ENCODE measurements at regions of chr7 and their contacts with region 1.

Region 1: DNA sequence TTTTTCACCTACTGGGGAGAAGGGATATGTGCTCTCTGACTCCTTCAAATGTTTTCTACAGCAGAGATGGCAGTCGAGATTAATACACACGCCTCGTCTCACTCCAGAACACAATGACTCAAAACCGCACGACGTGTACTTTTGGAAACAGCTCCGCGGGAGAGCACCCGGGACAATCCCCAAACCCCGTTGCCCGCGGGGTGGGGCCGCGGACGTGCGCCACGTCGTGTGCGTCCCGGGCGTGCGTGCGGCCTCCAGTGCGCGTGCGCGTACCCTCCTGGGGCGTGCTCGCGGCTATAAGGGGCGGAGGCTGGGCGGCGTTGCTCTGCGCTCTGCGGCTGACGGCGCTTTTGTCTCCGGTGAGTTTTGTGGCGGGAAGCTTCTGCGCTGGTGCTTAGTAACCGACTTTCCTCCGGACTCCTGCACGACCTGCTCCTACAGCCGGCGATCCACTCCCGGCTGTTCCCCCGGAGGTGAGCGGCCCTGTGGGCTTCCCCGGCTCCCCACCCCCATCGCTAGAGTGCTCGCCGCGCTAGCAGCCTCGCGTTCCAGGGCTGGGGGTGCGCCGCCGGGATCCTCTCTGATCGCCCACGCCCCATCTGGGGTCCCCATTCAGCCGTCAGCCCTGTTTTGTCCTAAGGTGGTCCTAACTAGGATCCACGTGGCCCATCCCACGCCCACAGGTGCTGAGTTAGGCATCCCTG is at the start of gene HILPDA:
- DNase-seq: peak; percentile 96
- ATAC-seq: peak; percentile 81
- H3K4me3 Mint-ChIP-seq: peak within 1 kb of the TSS; percentile 83
- H3K27ac Mint-ChIP-seq: peak within 1 kb of the TSS; percentile 99
- H3K4me1 Mint-ChIP-seq: peaks cover 59% of the 10 kb centered on the region
- H3K27me3 Mint-ChIP-seq: peaks cover 11% of the 10 kb centered on the region
- CTCF ChIP-seq: no peak
- total RNA-seq, gene HILPDA: 344 to 362 TPM

Region 2: DNA sequence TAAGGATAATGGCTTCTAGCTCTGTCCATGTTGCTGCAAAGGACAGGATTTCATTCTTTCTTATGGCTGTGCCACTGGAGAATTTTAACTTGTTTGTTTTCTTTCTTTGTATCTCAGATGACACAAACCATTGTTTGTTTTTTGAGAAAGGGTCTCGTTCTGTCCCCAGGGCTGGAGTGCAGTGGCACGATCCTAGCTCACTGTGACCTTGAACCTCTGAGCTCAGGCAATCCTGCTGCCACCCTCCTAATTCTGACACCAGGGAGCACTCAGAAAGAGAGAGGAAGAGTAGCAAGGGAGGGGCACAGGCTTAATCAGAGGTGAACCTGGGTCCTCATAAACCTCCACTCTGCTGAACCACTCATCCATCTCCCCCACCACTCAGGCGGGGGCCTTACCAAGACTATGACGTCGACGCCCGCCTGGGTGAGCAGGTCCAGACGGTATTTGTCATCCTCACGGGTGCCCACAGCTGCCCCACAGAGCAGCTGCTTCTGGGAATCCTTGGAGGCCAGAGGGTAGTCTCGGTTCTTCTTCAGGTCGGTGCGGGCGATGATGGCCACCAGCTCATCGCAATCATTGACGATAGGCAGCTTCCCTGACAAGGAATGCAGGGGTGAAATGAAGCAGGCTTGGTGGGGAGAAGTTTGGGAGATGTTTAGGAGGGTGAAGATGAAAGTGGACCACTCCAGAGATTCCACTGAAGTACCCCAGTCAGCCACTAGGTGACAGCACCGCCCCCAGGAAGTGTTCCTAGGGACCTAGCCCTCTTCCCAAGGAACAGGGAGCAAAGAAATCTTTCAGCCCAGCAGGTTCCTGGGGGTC is 57.5 kb before region 1 on chr7:
- CTCF ChIA-PET with region 1: interaction called, 19 read pairs
- POLR2A ChIA-PET with region 1: no interaction called
- intact Hi-C with region 1: loop called (anchors 10 kb)
- DNase-seq: peak; percentile 58
- ATAC-seq: peak; percentile 72
- H3K4me3 Mint-ChIP-seq: no peak overlapping the region
- H3K27ac Mint-ChIP-seq: no peak overlapping the region
- H3K4me1 Mint-ChIP-seq: no peaks in the 10 kb centered on the region
- H3K27me3 Mint-ChIP-seq: no peaks in the 10 kb centered on the region
- CTCF ChIP-seq: peak; percentile 96

Region 3: GRCh38 chr7:128409596-128410160 is 46.0 kb before region 1 on chr7 and contains the start of gene IMPDH1:
- CTCF ChIA-PET with region 1: interaction called, 43 read pairs
- POLR2A ChIA-PET with region 1: interaction called, 3 read pairs
- intact Hi-C with region 1: loop called (anchors 10 kb)
- DNase-seq: peak; percentile 85
- ATAC-seq: peak; percentile 84
- H3K4me3 Mint-ChIP-seq: peak within 1 kb of the TSS; percentile 76
- H3K27ac Mint-ChIP-seq: peak within 1 kb of the TSS; percentile 59
- H3K4me1 Mint-ChIP-seq: peaks cover 18% of the 10 kb centered on the region
- H3K27me3 Mint-ChIP-seq: peaks cover 10% of the 10 kb centered on the region
- CTCF ChIP-seq: no peak
- total RNA-seq, gene IMPDH1: 60.5 to 68.1 TPM

Region 4: DNA sequence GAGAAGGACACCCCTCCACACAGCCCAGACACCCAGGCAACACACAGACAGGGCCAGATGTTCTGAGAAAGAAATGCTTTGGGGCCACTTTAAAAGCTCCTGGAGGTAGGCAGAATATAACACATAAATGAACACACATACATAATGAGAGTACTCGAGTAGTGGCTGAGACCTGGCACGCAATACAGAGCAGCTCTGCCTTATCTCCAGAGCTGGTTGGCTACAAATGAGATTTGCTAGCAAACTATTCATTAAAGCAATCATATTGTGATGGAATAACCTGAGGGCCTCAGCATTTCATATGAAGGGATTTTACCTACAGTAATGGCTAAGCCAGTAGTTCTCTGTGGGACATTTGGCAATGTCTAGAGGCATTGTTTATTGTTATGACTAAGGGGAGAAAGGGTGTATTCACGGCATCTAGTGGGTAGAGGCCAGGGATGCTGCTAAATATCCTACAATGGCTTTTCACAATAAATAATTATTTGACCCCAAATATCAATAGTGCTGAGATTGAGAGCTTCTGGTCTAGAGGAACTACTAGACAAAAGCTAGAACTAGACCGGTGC is 40.4 kb before region 1 on chr7:
- CTCF ChIA-PET with region 1: interaction called, 43 read pairs
- POLR2A ChIA-PET with region 1: interaction called, 6 read pairs
- intact Hi-C with region 1: no loop called
- DNase-seq: no peak
- ATAC-seq: no peak
- H3K4me3 Mint-ChIP-seq: no peak overlapping the region
- H3K27ac Mint-ChIP-seq: no peak overlapping the region
- H3K4me1 Mint-ChIP-seq: peaks cover 2% of the 10 kb centered on the region
- H3K27me3 Mint-ChIP-seq: peaks cover 10% of the 10 kb centered on the region
- CTCF ChIP-seq: no peak

Region 5: GRCh38 chr7:128443831-128444600 is 11.7 kb before region 1 on chr7:
- CTCF ChIA-PET with region 1: interaction called, 60 read pairs
- POLR2A ChIA-PET with region 1: interaction called, 6 read pairs
- intact Hi-C with region 1: no loop called
- DNase-seq: peak; percentile 42
- ATAC-seq: peak; percentile 79
- H3K4me3 Mint-ChIP-seq: no peak overlapping the region
- H3K27ac Mint-ChIP-seq: no peak overlapping the region
- H3K4me1 Mint-ChIP-seq: peaks cover 21% of the 10 kb centered on the region
- H3K27me3 Mint-ChIP-seq: no peaks in the 10 kb centered on the region
- CTCF ChIP-seq: no peak

Region 6: DNA sequence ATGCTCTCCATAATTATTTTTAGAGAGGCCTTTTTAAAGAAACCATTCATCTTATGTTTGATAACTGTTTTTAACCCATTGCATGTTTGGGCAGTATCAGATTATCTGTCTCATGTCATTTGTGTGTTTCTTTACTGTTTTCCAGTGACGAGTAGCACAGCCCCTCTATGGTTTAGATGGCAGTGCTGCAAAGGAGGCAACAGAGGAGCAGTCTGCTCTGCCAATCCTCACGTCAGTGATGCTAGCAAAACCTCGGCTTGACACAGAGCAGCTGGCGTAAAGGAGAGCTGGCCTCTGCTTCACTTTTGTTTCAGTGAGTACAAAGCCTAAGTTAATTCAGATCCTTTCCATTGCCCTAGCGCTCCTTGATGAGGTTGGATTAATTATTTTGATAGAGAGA is 136.0 kb after region 1 on chr7:
- CTCF ChIA-PET with region 1: no interaction called
- POLR2A ChIA-PET with region 1: no interaction called
- intact Hi-C with region 1: no loop called
- DNase-seq: no peak
- ATAC-seq: no peak
- H3K4me3 Mint-ChIP-seq: no peak overlapping the region
- H3K27ac Mint-ChIP-seq: no peak overlapping the region
- H3K4me1 Mint-ChIP-seq: peaks cover 6% of the 10 kb centered on the region
- H3K27me3 Mint-ChIP-seq: no peaks in the 10 kb centered on the region
- CTCF ChIP-seq: no peak

Measured in activated CD8-positive, alpha-beta T cell treated with anti-CD3 and anti-CD28 coated beads for 36 hours (primary cell).